Sciatic nerve (tissue), 2 donors: ENCODE measurements at regions of chr20 and their contacts with region 1.

Region 1: GRCh38 chr20:44683263-44684046 is 31.7 kb upstream of the CCN5 start:
- DNase-seq: no peak
- ATAC-seq: peak; percentile 38

Region 2: GRCh38 chr20:44733341-44734069 is 50.0 kb after region 1 on chr20:
- intact Hi-C with region 1: loop called (anchors 1 kb)
- DNase-seq: peak; percentile 84
- ATAC-seq: peak; percentile 41

Region 3: DNA sequence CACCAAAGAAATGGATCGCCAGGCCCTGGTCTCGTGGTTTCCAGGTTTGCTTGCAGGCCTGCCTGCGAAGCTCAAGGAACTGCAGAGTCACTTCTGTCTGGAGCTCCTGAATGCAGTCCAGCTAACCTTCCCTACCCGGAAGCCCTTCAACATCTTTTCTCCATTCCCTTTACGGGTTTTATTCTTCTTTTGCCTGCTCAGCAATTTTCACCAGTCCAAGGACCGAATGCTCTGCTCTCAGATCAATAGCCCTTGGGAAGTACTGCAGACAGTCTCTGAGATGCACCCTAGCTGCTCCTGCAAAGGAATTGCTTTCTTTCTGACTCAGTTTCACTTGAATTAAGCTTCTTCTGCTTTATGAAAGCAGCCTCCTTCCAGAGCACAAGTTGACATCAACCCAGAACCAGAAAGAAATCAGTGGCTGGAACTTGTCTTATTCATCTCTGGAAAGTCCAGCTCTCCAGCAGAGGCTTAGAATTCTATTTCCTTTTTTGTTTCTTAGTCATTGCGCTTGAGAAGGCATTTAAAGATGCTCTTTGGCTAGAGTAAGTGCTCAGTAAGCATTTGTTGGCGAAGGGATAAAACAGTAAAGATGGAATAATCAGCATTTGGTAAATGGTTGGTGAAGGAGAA is 183.4 kb after region 1 on chr20:
- intact Hi-C with region 1: loop called (anchors 5 kb)
- DNase-seq: no peak
- ATAC-seq: no peak